CD8-positive, alpha-beta T cell (primary cell): ENCODE measurements at regions of chr3 and their contacts with region 1.

Region 1: GRCh38 chr3:14947886-14948555 is 638 bp downstream of the NR2C2 start:
- DNase-seq: peak; percentile 92 to 98 (median 95)
- ATAC-seq: peak; percentile 88
- H3K4me3 ChIP-seq: peak overlapping the region; percentile 98 to 99
- H3K4me3 Mint-ChIP-seq: peak overlapping the region; percentile 99
- H3K27ac ChIP-seq: peak overlapping the region; percentile 97 to 99
- H3K27ac Mint-ChIP-seq: peak overlapping the region; percentile 100
- H3K4me1 ChIP-seq: peaks cover 22% of the 10 kb centered on the region
- H3K4me1 Mint-ChIP-seq: peaks cover 70% of the 10 kb centered on the region
- H3K27me3 ChIP-seq: no peaks in the 10 kb centered on the region
- H3K27me3 Mint-ChIP-seq: no peaks in the 10 kb centered on the region
- CTCF ChIP-seq: no peak

Region 2: DNA sequence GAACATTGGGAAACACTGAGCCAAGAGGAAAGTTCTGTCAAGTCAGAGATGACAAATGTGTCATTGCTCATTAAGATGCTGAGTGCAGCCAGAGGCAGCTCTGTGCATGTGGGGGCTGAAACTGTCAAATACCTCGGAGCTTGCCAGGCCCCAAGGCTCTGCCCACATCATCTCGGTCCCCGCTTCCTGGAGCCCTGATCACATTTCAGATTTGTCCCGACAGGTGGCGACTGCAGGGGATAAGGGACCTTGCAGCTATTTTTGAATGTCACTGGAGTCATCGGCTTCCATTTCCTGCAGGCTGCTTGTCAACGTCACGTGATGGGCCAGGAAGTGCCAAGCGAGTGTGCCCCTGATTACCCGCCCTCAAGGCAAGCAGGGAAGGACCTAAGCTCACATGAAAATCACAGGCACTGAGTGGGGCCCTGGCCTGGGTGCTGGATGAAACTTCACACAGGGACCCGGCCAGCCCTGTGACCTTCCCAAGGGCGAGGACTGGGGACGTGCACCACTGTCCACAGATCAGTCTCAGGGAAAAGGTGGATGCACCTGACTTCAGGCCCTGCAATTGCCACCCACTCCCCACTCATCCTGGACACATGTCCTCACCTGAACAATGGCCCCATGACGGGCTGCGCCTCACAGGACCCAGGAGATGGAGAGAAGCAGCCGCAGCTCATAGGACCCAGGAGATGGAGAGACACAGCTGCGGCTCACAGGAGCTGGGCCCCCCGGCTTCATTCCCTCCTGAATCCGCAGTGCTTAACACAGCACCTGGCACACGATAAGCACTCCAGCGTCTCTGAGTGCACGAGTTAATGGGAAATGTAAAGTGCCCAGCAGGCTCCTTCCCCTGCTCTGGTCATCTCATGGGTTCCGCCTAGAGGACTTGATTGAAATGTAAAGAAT is 1601.3 kb before region 1 on chr3:
- CTCF ChIA-PET with region 1: no interaction called
- POLR2A ChIA-PET with region 1: no interaction called
- intact Hi-C with region 1: loop called in 1 of 2 experiments (anchors 10 kb)
- DNase-seq: peak; percentile 53 to 91 (median 75)
- ATAC-seq: peak; percentile 90
- H3K4me3 ChIP-seq: peak overlapping the region in 1 of 2 experiments; percentile 14
- H3K4me3 Mint-ChIP-seq: peak overlapping the region; percentile 42
- H3K27ac ChIP-seq: peak overlapping the region; percentile 18 to 55
- H3K27ac Mint-ChIP-seq: peak overlapping the region; percentile 88
- H3K4me1 ChIP-seq: peaks cover 49% of the 10 kb centered on the region
- H3K4me1 Mint-ChIP-seq: peaks cover 61% of the 10 kb centered on the region
- H3K27me3 ChIP-seq: no peaks in the 10 kb centered on the region
- H3K27me3 Mint-ChIP-seq: no peaks in the 10 kb centered on the region
- CTCF ChIP-seq: peak; percentile 44

Region 3: DNA sequence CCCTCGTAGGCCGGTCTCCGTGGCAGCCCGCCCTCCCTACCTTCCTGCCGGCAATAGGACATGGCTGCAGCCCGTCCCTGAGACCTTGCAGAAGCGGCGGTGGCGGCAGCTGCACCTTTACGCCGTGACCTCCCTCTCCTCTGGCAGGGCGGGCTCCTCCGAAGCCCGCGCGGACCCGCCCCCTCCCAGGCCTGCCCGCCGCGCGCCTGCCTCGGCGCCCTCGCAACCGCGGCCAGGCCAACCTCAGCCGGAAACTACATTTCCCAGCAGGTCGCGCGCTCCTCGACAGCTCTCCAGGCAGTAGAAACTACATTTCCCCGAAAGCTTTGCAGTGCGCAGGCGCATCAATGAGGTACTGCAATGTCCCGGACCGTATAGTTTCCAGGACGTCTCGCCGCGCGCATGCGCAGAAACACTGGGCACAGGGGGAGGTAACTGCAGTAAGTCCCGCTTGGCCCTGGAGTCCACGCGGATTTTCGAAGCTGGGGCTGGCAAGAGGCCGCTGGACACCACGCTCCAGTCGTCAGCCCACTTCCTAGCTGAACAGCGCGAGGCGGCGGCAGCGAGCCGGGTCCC is 823.3 kb before region 1 on chr3 and contains the starts of genes CHCHD4 and TMEM43:
- CTCF ChIA-PET with region 1: interaction called, 4 read pairs
- POLR2A ChIA-PET with region 1: no interaction called
- intact Hi-C with region 1: loop called (anchors 2 kb)
- DNase-seq: peak; percentile 95 to 100 (median 98)
- ATAC-seq: peak; percentile 87
- H3K4me3 ChIP-seq: peak within 1 kb of the TSS; percentile 95 to 100
- H3K4me3 Mint-ChIP-seq: peak within 1 kb of the TSS; percentile 96
- H3K27ac ChIP-seq: peak within 1 kb of the TSS; percentile 89 to 92
- H3K27ac Mint-ChIP-seq: peak within 1 kb of the TSS; percentile 93
- H3K4me1 ChIP-seq: peaks cover 30% of the 10 kb centered on the region
- H3K4me1 Mint-ChIP-seq: peaks cover 56% of the 10 kb centered on the region
- H3K27me3 ChIP-seq: no peaks in the 10 kb centered on the region
- H3K27me3 Mint-ChIP-seq: no peaks in the 10 kb centered on the region
- CTCF ChIP-seq: no peak
- total RNA-seq, gene CHCHD4: 0.71 to 1.7 TPM
- total RNA-seq, gene TMEM43: 20.1 to 24.3 TPM

Region 4: DNA sequence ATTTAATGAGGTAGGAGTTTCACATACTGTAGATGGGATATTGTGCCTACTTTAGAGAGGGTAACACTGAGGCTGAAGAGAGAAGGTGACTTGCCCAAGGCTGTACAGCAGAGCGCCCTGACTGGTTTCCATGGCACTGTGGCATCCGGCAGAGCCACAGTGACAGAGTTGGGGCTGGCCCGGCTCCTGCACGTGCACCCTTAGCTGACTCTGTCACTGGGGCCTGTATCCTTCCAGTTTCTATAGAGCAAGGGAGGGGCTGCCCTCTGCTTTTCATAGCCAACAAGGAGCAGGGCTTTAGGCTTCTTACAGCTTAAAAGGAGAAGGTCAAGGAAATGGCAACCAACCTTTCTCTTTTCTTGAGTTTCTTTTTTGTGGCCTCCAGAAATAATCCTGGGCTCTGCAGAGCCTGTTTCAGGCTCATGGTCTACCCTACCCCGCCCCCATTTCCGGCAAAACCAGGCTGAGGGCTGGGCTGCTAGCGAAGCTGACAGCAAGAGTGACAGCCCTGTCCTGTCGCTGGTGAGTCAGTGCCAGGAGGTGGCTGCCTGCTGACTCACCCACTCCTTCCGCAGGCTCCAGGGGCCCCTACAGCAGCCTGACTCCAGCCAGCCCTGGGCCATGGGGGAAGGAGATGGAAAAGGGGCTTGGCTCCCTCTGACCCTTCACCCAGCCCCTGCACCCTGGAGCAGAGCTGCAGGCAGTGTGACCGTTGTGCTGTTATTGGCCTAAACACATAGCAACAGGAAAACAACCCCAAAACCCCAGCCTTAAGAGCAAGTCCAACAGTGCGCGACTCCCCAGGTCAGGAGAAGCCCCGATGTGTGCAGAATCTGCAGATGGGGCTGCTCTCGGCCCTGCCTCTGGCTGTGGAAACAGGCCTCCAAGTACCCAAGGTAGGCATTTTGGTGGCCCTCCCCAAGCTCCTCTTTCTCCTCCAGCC is 515.9 kb before region 1 on chr3:
- CTCF ChIA-PET with region 1: no interaction called
- POLR2A ChIA-PET with region 1: no interaction called
- intact Hi-C with region 1: loop called in 1 of 2 experiments (anchors 5 kb)
- DNase-seq: peak; percentile 85 to 97 (median 95)
- ATAC-seq: peak; percentile 83
- H3K4me3 ChIP-seq: peak overlapping the region in 1 of 2 experiments; percentile 27
- H3K4me3 Mint-ChIP-seq: peak overlapping the region; percentile 75
- H3K27ac ChIP-seq: peak overlapping the region; percentile 66 to 95
- H3K27ac Mint-ChIP-seq: peak overlapping the region; percentile 99
- H3K4me1 ChIP-seq: peaks cover 75% of the 10 kb centered on the region
- H3K4me1 Mint-ChIP-seq: peaks cover 85% of the 10 kb centered on the region
- H3K27me3 ChIP-seq: no peaks in the 10 kb centered on the region
- H3K27me3 Mint-ChIP-seq: no peaks in the 10 kb centered on the region
- CTCF ChIP-seq: no peak

Region 5: GRCh38 chr3:14962762-14963161 is 14.7 kb after region 1 on chr3:
- CTCF ChIA-PET with region 1: no interaction called
- POLR2A ChIA-PET with region 1: interaction called, 11 read pairs
- intact Hi-C with region 1: no loop called
- DNase-seq: no peak
- ATAC-seq: no peak
- H3K4me3 ChIP-seq: no peak overlapping the region
- H3K4me3 Mint-ChIP-seq: no peak overlapping the region
- H3K27ac ChIP-seq: no peak overlapping the region
- H3K27ac Mint-ChIP-seq: no peak overlapping the region
- H3K4me1 ChIP-seq: peaks cover 8% of the 10 kb centered on the region
- H3K4me1 Mint-ChIP-seq: peaks cover 27% of the 10 kb centered on the region
- H3K27me3 ChIP-seq: no peaks in the 10 kb centered on the region
- H3K27me3 Mint-ChIP-seq: no peaks in the 10 kb centered on the region
- CTCF ChIP-seq: no peak

Region 6: DNA sequence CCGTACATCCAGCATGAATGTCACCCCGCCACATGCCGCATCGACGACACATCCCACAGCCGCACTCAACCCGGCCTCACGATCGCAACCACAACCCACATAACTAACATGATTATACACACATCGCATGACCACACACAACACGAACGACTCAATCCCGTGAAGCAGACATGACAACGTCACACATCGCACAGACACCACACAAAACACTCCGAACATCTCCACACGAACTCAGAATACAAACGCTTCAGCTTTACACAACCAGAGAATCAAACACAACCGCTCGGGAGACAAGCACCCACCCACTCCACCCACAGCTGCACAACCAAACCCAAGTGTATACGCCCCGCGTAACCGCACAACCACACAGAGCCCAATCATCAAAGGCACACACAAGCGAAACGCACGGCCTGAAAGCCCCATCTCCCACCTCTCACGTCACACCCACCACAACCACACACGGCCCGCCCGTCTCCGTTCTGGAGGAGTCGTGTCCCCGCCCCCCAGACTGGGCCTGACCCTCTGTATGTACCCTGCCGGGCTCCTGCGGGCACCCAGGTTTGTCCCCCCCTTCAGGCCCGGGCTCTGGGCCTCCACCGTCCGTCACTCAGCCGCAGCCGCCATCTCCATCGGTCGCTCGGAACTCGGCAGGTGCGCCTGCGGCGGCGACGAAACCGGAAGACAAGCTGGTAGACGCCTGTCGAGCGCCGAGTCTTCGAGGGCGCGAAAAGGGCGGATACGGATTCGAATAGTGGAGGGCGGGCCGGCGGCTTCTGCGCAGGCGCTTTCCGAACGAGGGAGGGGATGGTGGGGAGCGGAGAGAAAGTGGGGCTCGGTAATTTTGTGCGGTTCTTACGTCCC is 150.7 kb after region 1 on chr3 and contains the start of gene RBSN:
- CTCF ChIA-PET with region 1: no interaction called
- POLR2A ChIA-PET with region 1: interaction called, 4 read pairs
- intact Hi-C with region 1: loop called (anchors 1 to 2 kb)
- DNase-seq: peak; percentile 87 to 98 (median 94)
- ATAC-seq: peak; percentile 76
- H3K4me3 ChIP-seq: peak within 1 kb of the TSS; percentile 71 to 76
- H3K4me3 Mint-ChIP-seq: peak within 1 kb of the TSS; percentile 88
- H3K27ac ChIP-seq: peak within 1 kb of the TSS; percentile 96 to 98
- H3K27ac Mint-ChIP-seq: peak within 1 kb of the TSS; percentile 95
- H3K4me1 ChIP-seq: peaks cover 16% of the 10 kb centered on the region
- H3K4me1 Mint-ChIP-seq: peaks cover 31% of the 10 kb centered on the region
- H3K27me3 ChIP-seq: no peaks in the 10 kb centered on the region
- H3K27me3 Mint-ChIP-seq: no peaks in the 10 kb centered on the region
- CTCF ChIP-seq: no peak
- total RNA-seq, gene RBSN: 41.9 to 48.1 TPM

Region 7: GRCh38 chr3:15113463-15113862 is 165.4 kb after region 1 on chr3:
- CTCF ChIA-PET with region 1: no interaction called
- POLR2A ChIA-PET with region 1: no interaction called
- intact Hi-C with region 1: no loop called
- DNase-seq: no peak
- ATAC-seq: no peak
- H3K4me3 ChIP-seq: no peak overlapping the region
- H3K4me3 Mint-ChIP-seq: no peak overlapping the region
- H3K27ac ChIP-seq: no peak overlapping the region
- H3K27ac Mint-ChIP-seq: no peak overlapping the region
- H3K4me1 ChIP-seq: no peaks in the 10 kb centered on the region
- H3K4me1 Mint-ChIP-seq: no peaks in the 10 kb centered on the region
- H3K27me3 ChIP-seq: no peaks in the 10 kb centered on the region
- H3K27me3 Mint-ChIP-seq: no peaks in the 10 kb centered on the region
- CTCF ChIP-seq: no peak